Endothelial cell of umbilical vein (primary cell): ENCODE measurements at regions of chr20 and their contacts with region 1.

Region 1: DNA sequence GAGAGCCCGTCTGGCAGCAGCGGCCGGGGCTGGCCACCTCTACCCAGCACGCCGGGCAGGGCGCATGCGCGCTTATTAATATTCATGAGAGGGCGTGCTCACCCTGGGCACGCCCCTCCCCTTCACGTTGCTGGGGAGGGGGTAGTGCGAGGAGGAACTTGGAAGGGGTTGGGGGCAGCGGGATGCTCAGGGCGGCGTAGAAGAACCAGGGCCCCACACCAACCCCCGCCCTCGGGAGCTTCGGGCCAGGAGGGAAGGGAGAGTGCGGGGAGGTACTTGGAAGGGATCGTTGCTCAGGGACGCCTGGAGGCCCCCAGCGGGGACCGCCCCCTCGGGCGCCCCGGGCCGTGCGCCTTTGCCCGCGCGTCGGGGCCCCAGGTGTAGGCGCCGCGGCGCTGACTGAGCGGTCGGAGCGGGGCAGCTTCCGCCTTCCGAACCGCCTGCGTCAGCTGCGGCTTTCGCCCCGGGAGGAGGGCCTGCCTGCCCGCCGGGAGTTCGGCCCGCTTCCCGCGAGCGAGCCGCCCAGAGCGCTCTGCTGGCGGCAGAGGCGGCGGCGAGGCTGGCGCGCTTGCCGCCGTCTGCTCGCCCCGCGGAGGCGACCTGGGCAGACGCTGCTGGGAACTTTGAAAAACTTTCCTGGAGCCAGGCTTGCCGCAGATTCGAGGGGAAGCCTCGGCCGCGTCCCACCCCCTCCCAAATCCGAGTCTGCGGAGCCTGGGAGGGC is at the start of gene JAG1:
- DNase-seq: peak; percentile 94
- H3K4me3 ChIP-seq: peak within 1 kb of the TSS; percentile 91 to 95 (median 94)
- H3K27ac ChIP-seq: peak within 1 kb of the TSS; percentile 92
- H3K4me1 ChIP-seq: peaks cover 31% of the 10 kb centered on the region
- H3K27me3 ChIP-seq: no peaks in the 10 kb centered on the region
- CTCF ChIP-seq: no peak
- POLR2A ChIP-seq: peak; percentile 47
- total RNA-seq, gene JAG1: 31.7 and 37.0 TPM in 2 replicates

Region 2: DNA sequence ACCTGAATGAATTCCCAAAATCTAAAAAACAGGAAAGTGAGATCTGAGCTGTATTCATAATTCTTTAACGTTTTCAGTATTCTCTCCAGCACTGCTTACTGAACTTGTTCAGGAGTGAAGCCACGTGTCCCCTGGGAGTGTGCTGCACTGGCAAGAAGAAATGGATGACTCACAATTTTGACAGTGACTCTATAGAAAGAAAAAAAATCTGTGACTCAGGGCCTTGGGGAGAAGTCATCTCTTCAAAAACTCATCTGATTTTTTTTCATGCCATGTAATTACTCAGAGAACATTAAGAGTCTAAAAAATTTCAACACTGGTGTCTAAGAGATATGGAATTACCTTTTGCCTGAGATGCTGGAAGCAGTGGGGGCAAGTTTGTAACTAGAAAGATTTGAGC is 599.6 kb before region 1 on chr20:
- CTCF ChIA-PET with region 1: no interaction called
- POLR2A ChIA-PET with region 1: no interaction called
- dilution Hi-C with region 1: no loop called
- intact Hi-C with region 1: loop called (anchors 5 kb)
- DNase-seq: peak; percentile 76
- H3K4me3 ChIP-seq: no peak overlapping the region
- H3K27ac ChIP-seq: peak overlapping the region; percentile 50
- H3K4me1 ChIP-seq: peaks cover 43% of the 10 kb centered on the region
- H3K27me3 ChIP-seq: no peaks in the 10 kb centered on the region
- CTCF ChIP-seq: no peak
- POLR2A ChIP-seq: no peak

Region 3: GRCh38 chr20:10553326-10553984 is 120.7 kb before region 1 on chr20:
- CTCF ChIA-PET with region 1: interaction called, 14 read pairs
- POLR2A ChIA-PET with region 1: no interaction called
- dilution Hi-C with region 1: no loop called
- intact Hi-C with region 1: loop called (anchors 1 kb)
- DNase-seq: peak; percentile 84
- H3K4me3 ChIP-seq: no peak overlapping the region
- H3K27ac ChIP-seq: no peak overlapping the region
- H3K4me1 ChIP-seq: peaks cover 15% of the 10 kb centered on the region
- H3K27me3 ChIP-seq: no peaks in the 10 kb centered on the region
- CTCF ChIP-seq: peak; percentile 64 to 70
- POLR2A ChIP-seq: no peak

Region 4: DNA sequence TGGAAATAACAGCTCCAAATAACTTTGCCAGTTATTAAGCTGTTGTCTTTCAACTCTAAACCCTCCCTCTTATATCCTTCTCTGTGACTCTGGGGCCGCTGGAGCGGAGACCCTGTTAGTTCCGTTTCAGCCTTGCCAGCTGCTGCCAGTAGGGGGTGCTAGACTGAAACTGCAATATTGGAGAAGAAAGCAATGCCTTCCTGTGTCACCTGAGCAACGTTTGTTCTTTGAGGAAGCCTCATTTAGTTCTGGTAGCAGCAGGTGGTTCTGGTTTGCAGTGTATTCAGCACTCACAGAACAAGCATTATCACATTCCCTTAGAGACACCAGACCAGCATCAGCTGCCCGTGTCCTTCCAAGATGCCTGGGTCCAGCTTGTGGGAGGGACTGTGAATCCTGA is 22.5 kb after region 1 on chr20:
- CTCF ChIA-PET with region 1: no interaction called
- POLR2A ChIA-PET with region 1: no interaction called
- dilution Hi-C with region 1: no loop called
- intact Hi-C with region 1: no loop called
- DNase-seq: no peak
- H3K4me3 ChIP-seq: no peak overlapping the region
- H3K27ac ChIP-seq: no peak overlapping the region
- H3K4me1 ChIP-seq: no peaks in the 10 kb centered on the region
- H3K27me3 ChIP-seq: no peaks in the 10 kb centered on the region
- CTCF ChIP-seq: peak; percentile 37 to 42
- POLR2A ChIP-seq: no peak

Region 5: GRCh38 chr20:10910535-10911178 is 236.5 kb after region 1 on chr20:
- CTCF ChIA-PET with region 1: interaction called, 4 read pairs
- POLR2A ChIA-PET with region 1: no interaction called
- dilution Hi-C with region 1: no loop called
- intact Hi-C with region 1: loop called (anchors 1 kb)
- DNase-seq: peak; percentile 88
- H3K4me3 ChIP-seq: no peak overlapping the region
- H3K27ac ChIP-seq: peak overlapping the region; percentile 21
- H3K4me1 ChIP-seq: peaks cover 13% of the 10 kb centered on the region
- H3K27me3 ChIP-seq: no peaks in the 10 kb centered on the region
- CTCF ChIP-seq: peak in 1 of 2 donors; percentile 36
- POLR2A ChIP-seq: no peak

Region 6: GRCh38 chr20:11112832-11113231 is 438.7 kb after region 1 on chr20:
- CTCF ChIA-PET with region 1: interaction called, 5 read pairs
- POLR2A ChIA-PET with region 1: no interaction called
- dilution Hi-C with region 1: no loop called
- intact Hi-C with region 1: loop called (anchors 5 kb)
- DNase-seq: no peak
- H3K4me3 ChIP-seq: no peak overlapping the region
- H3K27ac ChIP-seq: no peak overlapping the region
- H3K4me1 ChIP-seq: peaks cover 18% of the 10 kb centered on the region
- H3K27me3 ChIP-seq: no peaks in the 10 kb centered on the region
- CTCF ChIP-seq: no peak
- POLR2A ChIP-seq: no peak

Region 7: GRCh38 chr20:11274141-11274594 is 600.0 kb after region 1 on chr20:
- CTCF ChIA-PET with region 1: interaction called, 8 read pairs
- POLR2A ChIA-PET with region 1: no interaction called
- dilution Hi-C with region 1: no loop called
- intact Hi-C with region 1: loop called (anchors 1 kb)
- DNase-seq: peak; percentile 74
- H3K4me3 ChIP-seq: no peak overlapping the region
- H3K27ac ChIP-seq: no peak overlapping the region
- H3K4me1 ChIP-seq: no peaks in the 10 kb centered on the region
- H3K27me3 ChIP-seq: no peaks in the 10 kb centered on the region
- CTCF ChIP-seq: peak; percentile 42 to 46
- POLR2A ChIP-seq: no peak